Activated CD4-positive, alpha-beta memory T cell treated with anti-CD3 and anti-CD28 coated beads for 36 hours (primary cell): ENCODE measurements at regions of chr17 and their contacts with region 1.

Region 1: DNA sequence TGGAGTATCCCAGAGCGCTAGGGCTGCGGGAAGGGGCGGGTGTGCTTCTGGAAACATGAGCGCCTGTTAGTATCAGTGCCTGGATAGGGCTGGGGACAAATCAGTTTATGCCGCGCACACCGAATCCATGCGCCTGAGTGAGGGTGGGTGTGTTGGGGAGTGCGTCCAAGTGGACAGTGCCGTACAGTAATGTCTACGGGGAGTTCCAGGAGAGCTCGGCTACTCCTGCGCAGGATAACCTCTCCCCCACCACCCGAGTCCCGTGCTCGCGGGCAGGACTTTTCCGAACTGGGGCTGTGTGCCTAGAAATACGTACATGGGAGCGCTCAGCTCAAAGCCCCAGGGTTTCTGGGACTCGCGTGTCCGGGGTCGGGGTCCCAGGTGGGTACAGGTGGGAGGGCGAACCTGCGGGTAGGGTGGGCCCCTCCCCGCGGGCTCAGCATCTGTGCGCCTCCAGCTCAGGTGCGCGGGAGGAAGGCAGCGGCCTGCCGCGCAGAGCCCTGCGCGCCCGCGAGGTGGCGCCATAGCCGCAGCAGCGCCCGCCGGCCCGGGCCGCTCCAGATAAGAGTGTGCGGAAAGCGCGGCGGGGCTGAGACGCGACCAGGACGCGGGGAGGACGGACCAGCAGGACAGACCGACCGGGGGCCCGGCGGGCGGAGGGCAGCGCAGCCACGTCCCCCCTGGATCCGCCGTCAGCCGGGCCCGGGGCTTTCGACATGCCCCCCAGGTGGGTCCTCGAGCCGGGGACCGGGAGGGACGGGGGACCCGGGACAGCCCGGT is at the start of gene HIC1:
- DNase-seq: peak; percentile 87
- H3K4me3 Mint-ChIP-seq: peak within 1 kb of the TSS; percentile 68
- H3K27ac Mint-ChIP-seq: peak within 1 kb of the TSS; percentile 33
- H3K4me1 Mint-ChIP-seq: peaks cover 16% of the 10 kb centered on the region
- H3K27me3 Mint-ChIP-seq: peaks cover 12% of the 10 kb centered on the region
- total RNA-seq, gene HIC1: 13.1 to 13.2 TPM

Region 2: DNA sequence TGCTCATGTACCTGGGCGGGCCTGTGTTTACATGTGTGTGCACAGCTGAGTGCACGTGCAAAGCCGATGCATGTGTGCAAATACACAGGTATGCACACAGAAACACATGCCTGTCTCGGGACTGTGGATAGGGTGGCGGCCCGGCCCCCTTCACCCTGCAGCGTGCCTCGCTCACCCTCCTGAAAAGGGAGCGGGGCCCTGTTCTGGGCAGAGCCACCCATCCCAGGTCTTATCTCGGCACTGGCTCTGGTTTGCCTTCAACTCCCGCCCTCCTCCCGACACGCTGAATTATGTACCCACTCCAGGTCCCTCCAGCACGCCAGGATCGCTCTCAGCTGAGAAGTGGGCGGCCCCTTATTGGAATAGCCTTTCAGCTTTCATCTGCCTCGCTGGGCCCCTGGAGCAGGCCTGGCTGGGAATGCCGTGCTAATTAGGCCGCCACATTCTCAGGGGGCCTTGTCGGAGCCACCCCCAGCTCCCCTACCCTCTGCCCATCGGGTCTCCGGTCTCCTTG is 107.4 kb before region 1 on chr17:
- CTCF ChIA-PET with region 1: no interaction called
- POLR2A ChIA-PET with region 1: no interaction called
- intact Hi-C with region 1: no loop called
- DNase-seq: no peak
- H3K4me3 Mint-ChIP-seq: no peak overlapping the region
- H3K27ac Mint-ChIP-seq: no peak overlapping the region
- H3K4me1 Mint-ChIP-seq: no peaks in the 10 kb centered on the region
- H3K27me3 Mint-ChIP-seq: no peaks in the 10 kb centered on the region

Region 3: DNA sequence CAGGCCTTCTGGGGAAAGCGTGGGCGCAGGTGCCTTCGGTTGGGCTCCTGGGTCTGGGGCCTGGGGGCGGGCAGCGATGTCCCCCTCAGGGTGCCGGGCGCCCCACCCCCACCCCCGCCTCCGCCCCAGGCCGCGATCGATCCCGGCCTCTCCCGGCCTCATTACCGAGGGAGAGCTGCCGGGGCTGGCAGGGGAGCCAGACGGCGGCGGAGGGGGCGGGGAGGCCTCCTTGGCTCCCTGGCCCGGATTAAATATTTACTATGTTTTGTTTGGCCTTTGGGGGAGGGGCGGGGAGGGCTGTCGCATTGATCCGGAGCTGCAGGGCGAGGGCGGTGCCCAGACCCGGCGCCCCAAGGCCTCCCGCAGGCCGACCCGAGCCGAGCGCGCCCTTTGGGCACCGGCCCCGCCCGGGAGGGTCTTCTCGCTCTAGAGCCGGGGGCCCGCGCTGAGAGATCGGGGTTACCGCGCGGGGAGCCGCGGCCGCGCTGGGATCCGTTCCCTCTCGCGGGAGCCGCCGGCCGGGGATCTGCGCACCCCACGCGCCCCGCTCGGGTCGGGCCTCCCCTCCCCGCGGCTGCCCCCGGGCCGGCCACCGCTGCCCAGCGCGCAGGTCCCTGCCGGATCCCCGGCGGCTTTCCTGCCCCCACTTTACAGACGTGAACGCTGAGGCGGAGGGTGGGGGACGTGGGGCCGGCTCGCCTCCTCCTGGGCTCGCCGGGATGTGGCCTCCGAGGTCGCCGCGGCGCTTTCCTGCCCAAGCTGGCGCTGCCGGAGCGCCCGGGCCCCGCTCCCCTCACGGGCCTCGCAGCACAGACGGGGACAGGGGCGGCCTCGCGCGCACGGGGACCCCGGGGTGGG is 56.5 kb before region 1 on chr17:
- CTCF ChIA-PET with region 1: no interaction called
- POLR2A ChIA-PET with region 1: no interaction called
- intact Hi-C with region 1: no loop called
- DNase-seq: peak; percentile 16
- H3K4me3 Mint-ChIP-seq: no peak overlapping the region
- H3K27ac Mint-ChIP-seq: no peak overlapping the region
- H3K4me1 Mint-ChIP-seq: peaks cover 2% of the 10 kb centered on the region
- H3K27me3 Mint-ChIP-seq: peaks cover 21% of the 10 kb centered on the region

Region 4: GRCh38 chr17:2064980-2065785 is 10.5 kb after region 1 on chr17:
- CTCF ChIA-PET with region 1: interaction called, 122 read pairs
- POLR2A ChIA-PET with region 1: interaction called, 12 read pairs
- intact Hi-C with region 1: no loop called
- DNase-seq: peak; percentile 89
- H3K4me3 Mint-ChIP-seq: no peak overlapping the region
- H3K27ac Mint-ChIP-seq: no peak overlapping the region
- H3K4me1 Mint-ChIP-seq: peaks cover 29% of the 10 kb centered on the region
- H3K27me3 Mint-ChIP-seq: peaks cover 2% of the 10 kb centered on the region

Region 5: DNA sequence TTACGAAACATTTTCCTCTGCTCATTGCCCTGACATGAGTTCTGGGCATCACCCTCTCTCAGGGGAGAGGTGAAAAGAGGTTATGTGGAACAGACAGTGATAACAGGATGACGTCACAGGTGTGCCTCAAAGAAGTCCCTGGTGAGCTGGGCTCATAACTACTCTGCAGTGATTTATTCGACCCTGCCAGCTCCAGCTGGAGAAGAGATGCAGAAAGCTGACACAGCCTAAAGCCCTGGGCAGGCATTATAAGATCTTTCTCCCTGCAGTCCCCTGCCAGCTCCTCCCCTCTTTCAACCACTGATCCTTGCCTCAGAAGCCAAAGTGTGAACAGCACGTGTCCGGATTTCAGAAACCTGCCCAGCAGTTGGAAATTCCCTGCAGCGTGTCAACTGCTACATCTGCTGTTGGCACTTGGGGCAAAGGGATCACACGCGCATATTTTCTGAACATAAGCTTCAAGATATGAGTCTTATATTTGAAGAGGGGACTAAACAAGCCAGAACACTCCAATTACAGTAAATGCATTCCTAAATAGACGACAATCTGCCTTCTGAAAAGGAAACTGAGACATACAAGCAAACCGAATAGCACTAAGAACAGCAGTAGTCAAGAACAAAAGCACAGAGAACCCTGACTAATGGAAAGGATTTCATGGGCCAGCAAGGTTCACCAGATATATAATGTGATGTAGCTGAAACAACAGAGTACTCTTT is 168.4 kb after region 1 on chr17:
- CTCF ChIA-PET with region 1: interaction called, 21 read pairs
- POLR2A ChIA-PET with region 1: interaction called, 3 read pairs
- intact Hi-C with region 1: no loop called
- DNase-seq: peak; percentile 81
- H3K4me3 Mint-ChIP-seq: peak overlapping the region; percentile 57
- H3K27ac Mint-ChIP-seq: peak overlapping the region; percentile 83
- H3K4me1 Mint-ChIP-seq: peaks cover 37% of the 10 kb centered on the region
- H3K27me3 Mint-ChIP-seq: no peaks in the 10 kb centered on the region

Region 6: GRCh38 chr17:2271985-2272702 is 217.4 kb after region 1 on chr17:
- CTCF ChIA-PET with region 1: interaction called, 12 read pairs
- POLR2A ChIA-PET with region 1: interaction called, 5 read pairs
- intact Hi-C with region 1: no loop called
- DNase-seq: peak; percentile 47
- H3K4me3 Mint-ChIP-seq: peak overlapping the region; percentile 40
- H3K27ac Mint-ChIP-seq: peak overlapping the region; percentile 88
- H3K4me1 Mint-ChIP-seq: peaks cover 62% of the 10 kb centered on the region
- H3K27me3 Mint-ChIP-seq: no peaks in the 10 kb centered on the region

Region 7: DNA sequence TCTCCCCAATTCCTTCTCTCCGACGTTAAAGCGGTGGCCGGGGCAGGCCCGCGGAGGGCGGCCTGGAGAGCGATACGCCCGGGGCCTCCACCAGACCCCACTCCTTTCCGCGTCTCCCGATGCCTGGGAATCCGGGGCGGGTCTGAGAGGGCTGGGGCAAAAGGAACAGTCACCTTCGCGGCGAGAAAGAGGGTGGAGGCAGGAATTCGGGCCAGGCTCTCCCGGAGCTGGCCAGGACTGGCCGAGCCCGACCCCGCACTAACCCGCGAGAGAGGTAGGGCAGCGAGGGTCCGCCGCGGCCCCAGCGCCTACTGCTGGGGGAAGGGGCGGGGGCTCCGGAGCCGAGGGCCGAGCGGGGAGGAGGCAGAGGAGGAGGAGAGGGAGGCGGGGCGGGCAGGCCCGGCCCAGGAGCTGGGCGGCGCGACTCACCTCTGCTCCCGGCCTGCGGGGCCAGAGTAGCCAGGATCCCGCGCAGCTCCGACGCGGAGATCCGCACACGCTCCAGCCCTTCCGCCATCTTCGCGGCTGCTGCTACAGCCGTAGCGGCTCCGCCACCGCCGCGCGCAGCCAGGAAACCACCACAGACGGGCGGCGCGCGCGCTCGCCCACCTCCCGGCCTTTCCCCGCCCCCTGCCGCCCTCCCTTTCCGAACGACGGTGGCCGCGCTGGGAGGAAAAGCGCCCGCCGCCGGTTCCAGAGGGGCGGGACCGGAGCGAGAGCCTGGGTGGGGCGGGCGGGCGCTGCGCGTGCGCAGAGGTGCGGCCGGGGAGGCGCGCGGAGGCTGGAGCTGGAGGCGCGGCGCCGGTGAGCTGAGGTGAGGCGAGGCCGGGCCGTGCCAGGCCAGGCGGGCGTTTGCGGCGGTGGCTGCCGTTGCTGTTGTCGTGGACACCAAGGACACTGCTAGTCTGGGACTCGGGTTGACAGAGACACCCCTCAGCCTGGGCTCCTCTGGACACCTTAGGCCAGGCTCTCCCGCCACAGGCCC is 248.8 kb after region 1 on chr17 and contains the starts of genes SMG6 and SRR:
- CTCF ChIA-PET with region 1: interaction called, 16 read pairs
- POLR2A ChIA-PET with region 1: interaction called, 4 read pairs
- intact Hi-C with region 1: loop called (anchors 5 kb)
- DNase-seq: peak; percentile 96
- H3K4me3 Mint-ChIP-seq: peak within 1 kb of the TSS; percentile 90
- H3K27ac Mint-ChIP-seq: peak within 1 kb of the TSS; percentile 75
- H3K4me1 Mint-ChIP-seq: peaks cover 46% of the 10 kb centered on the region
- H3K27me3 Mint-ChIP-seq: no peaks in the 10 kb centered on the region
- total RNA-seq, gene SMG6: 17.2 to 20.3 TPM
- total RNA-seq, gene SRR: 20.0 to 22.2 TPM

Region 8: DNA sequence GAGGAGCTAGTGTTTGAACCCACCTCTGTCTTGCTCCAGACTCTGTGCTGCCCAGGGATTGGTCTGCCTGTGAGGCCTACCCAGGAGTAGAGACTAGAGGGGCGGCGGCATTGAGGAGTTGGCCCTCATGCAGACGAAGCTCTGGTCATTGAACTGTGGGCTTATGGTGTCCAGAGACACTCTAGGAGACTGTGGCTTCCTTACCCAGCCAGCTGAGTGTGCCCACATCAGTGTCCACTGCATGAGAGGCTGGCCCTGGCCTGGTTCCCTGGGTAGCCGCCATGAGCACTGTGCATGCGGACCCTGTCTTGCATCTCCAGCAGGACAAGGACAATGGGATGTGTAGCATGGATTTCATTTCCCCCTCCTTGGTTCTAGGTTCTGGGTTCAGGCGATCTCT is 296.6 kb after region 1 on chr17:
- CTCF ChIA-PET with region 1: interaction called, 10 read pairs
- POLR2A ChIA-PET with region 1: no interaction called
- intact Hi-C with region 1: loop called (anchors 5 kb)
- DNase-seq: no peak
- H3K4me3 Mint-ChIP-seq: no peak overlapping the region
- H3K27ac Mint-ChIP-seq: no peak overlapping the region
- H3K4me1 Mint-ChIP-seq: peaks cover 17% of the 10 kb centered on the region
- H3K27me3 Mint-ChIP-seq: no peaks in the 10 kb centered on the region

Region 9: DNA sequence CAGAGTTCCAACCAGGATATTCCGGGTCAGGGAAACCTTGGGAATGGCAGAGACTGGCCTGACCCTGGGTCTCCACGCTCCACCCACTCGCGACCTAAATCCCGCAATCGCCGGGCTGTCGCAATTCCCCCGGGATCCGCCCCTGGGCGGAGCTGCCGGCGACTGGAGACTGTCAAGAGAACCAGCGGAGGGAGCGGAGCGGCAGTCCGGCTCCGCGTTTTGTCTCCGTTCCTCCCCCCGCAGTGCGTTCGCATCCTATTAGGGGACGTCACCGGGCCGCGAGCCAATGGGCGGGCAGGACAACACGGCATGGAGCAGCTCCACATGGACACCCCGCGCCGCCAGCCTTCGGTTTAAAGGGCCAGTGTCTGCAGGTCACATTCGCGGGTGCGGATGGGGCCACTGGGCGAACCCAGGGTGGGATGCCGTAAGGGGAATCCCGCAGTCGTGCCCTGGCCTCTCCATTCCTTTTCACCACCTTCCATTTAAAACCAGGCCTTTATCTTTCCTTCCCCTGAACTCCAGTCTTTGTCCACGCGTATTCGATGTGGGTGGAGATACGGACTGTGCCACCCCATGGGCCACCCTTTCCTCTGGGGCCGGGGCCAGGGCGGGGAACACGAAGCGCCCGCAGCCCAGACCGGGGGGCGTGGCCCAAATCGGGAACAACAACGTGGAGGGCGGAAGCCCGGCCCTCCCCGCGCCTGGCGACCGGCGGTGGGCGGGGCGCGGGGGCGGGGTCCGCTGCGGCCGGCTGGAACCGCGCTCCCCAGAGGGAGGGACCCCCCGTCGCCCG is 346.9 kb after region 1 on chr17:
- CTCF ChIA-PET with region 1: interaction called, 3 read pairs
- POLR2A ChIA-PET with region 1: interaction called, 3 read pairs
- intact Hi-C with region 1: loop called (anchors 5 kb)
- DNase-seq: peak; percentile 100
- H3K4me3 Mint-ChIP-seq: peak overlapping the region; percentile 96
- H3K27ac Mint-ChIP-seq: peak overlapping the region; percentile 91
- H3K4me1 Mint-ChIP-seq: peaks cover 43% of the 10 kb centered on the region
- H3K27me3 Mint-ChIP-seq: no peaks in the 10 kb centered on the region